ENCODE measurements at regions of chr1 and their contacts with region 1.

Region 1: DNA sequence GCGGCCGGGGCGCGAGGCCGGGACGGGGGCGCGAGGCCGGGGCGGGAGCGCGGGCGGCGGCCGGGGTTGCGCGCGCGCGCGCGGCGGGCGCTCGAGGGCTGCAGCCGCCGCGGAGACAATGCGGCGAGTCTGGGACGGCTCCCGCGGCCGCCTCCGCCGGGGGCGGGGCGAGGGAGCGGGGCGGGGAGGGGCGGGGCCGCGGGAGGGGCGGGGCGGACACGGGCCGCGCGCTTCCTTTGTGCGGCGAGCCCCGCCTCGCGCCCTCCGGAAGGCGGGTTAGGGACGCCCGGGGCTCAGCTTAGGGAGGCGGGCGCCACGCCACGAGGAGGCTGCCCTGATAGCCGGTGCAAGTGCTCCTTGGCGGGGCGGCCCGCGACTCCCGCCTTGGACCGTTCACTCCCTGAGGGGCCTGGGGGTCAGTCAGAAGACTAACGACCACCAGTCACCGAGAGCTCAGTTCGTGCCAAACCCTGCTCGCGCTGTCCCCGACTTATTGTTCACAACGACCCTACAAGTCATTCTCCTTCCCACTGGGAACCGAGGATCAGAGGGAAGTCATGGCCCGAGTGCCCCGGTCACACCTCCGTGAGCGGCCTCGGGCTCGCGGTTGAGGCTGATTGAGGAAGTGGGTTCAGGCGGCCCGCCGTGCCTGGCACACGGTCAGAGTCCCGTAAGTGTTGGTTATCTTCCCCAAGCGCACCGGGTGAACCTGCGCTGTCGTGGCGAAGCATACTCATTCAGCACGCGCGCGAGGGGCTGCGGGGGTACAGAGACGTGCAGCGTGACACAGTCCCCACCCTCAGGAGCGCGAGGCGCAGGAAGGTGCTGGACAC is 29.1 kb upstream of the A3GALT2 start:
- DNase-seq: peak; percentile 80 to 86
- ATAC-seq: peak; percentile 67 to 73
- H3K4me3 ChIP-seq: peak overlapping the region; percentile 66 to 83 (median 68)
- H3K27ac ChIP-seq: peak overlapping the region; percentile 90 to 99 (median 94)
- H3K4me1 ChIP-seq: peaks cover 22 to 28% of the 10 kb centered on the region in 2 donors
- H3K27me3 ChIP-seq: no peaks in the 10 kb centered on the region
- CTCF ChIP-seq: peak in 1 of 5 experiments; percentile 8
- POLR2A ChIP-seq: peak; percentile 91 to 94

Region 2: GRCh38 chr1:33030575-33030974 is 319.4 kb before region 1 on chr1:
- in situ Hi-C with region 1: no loop called
- intact Hi-C with region 1: loop called (anchors 5 kb)
- DNase-seq: peak; percentile 63 to 77
- ATAC-seq: peak; percentile 66 to 82
- H3K4me3 ChIP-seq: no peak overlapping the region
- H3K27ac ChIP-seq: peak overlapping the region; percentile 87 to 98 (median 96)
- H3K4me1 ChIP-seq: peaks cover 92 to 94% of the 10 kb centered on the region in 2 donors
- H3K27me3 ChIP-seq: no peaks in the 10 kb centered on the region
- CTCF ChIP-seq: no peak
- POLR2A ChIP-seq: no peak

Region 3: DNA sequence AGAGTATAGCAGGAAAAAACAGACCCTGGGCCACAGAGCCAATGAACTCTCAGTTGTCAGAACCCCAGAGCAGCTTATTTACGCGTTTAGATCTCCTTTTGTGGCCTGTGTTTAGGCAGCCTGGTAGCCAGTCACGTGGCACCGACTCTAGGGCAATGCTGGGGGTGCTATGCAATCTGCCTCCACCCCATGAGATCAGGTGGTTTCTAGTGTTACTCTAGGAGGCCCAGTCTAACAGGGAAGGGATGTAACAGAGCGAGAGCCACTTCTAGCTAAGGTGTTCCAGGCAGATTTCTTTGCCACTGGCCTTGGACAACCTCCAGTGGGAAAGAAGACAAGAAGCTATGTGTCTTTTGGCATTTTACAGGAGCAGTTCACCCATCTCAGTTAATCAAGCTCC is 17.1 kb before region 1 on chr1:
- in situ Hi-C with region 1: no loop called
- intact Hi-C with region 1: loop called (anchors 1 kb)
- DNase-seq: peak; percentile 80
- ATAC-seq: peak; percentile 63 to 65
- H3K4me3 ChIP-seq: peak overlapping the region in 1 of 4 donors; percentile 14
- H3K27ac ChIP-seq: peak overlapping the region; percentile 94 to 99 (median 98)
- H3K4me1 ChIP-seq: peaks cover 82 to 87% of the 10 kb centered on the region in 2 donors
- H3K27me3 ChIP-seq: no peaks in the 10 kb centered on the region
- CTCF ChIP-seq: no peak
- POLR2A ChIP-seq: peak; percentile 59 to 69

Measured in gastrocnemius medialis (tissue), 4 donors.